ENCODE measurements at regions of chr1 and their contacts with region 1.

Region 1: GRCh38 chr1:186985889-186986491 is 157.2 kb downstream of the PLA2G4A start:
- DNase-seq: no peak
- H3K4me3 ChIP-seq: no peak overlapping the region
- H3K27ac ChIP-seq: no peak overlapping the region
- H3K4me1 ChIP-seq: no peaks in the 10 kb centered on the region
- H3K27me3 ChIP-seq: no peaks in the 10 kb centered on the region
- CTCF ChIP-seq: peak; percentile 68

Region 2: DNA sequence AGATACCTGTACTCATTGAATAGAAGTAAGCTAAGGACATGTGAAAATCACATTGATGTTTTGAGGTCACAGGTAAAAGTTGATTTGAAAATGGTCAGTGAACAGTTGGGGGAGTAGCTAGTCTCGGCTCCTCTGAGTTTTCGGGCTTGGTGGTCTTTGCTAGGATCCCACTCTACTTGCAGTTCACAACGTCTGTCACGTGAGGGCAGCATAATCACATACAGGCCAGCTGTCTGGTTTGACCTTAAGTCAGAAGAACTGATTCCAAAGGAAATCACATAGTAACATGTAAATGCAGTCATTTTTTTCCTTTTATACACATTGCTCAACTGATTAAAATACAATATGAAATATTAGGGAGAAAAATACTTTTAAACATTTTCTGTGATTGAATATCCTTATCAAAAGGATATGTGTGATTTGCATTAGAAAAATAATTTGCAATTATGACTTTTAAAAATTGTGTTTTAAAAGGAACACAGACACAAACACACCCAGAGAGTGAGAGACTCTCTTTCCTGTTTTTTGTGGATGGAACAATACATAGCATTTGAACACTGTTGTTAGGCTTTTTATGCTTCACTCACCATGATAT is 503.2 kb before region 1 on chr1:
- intact Hi-C with region 1: loop called (anchors 2 kb)
- DNase-seq: peak; percentile 43
- H3K4me3 ChIP-seq: no peak overlapping the region
- H3K27ac ChIP-seq: no peak overlapping the region
- H3K4me1 ChIP-seq: no peaks in the 10 kb centered on the region
- H3K27me3 ChIP-seq: no peaks in the 10 kb centered on the region
- CTCF ChIP-seq: peak; percentile 88

Region 3: GRCh38 chr1:186605762-186606350 is 380.1 kb before region 1 on chr1:
- intact Hi-C with region 1: loop called (anchors 2 kb)
- DNase-seq: peak; percentile 34
- H3K4me3 ChIP-seq: no peak overlapping the region
- H3K27ac ChIP-seq: no peak overlapping the region
- H3K4me1 ChIP-seq: no peaks in the 10 kb centered on the region
- H3K27me3 ChIP-seq: no peaks in the 10 kb centered on the region
- CTCF ChIP-seq: peak; percentile 53

Region 4: GRCh38 chr1:186722711-186723309 is 263.2 kb before region 1 on chr1:
- intact Hi-C with region 1: loop called (anchors 5 kb)
- DNase-seq: peak; percentile 31
- H3K4me3 ChIP-seq: no peak overlapping the region
- H3K27ac ChIP-seq: no peak overlapping the region
- H3K4me1 ChIP-seq: no peaks in the 10 kb centered on the region
- H3K27me3 ChIP-seq: no peaks in the 10 kb centered on the region
- CTCF ChIP-seq: peak; percentile 50

Region 5: DNA sequence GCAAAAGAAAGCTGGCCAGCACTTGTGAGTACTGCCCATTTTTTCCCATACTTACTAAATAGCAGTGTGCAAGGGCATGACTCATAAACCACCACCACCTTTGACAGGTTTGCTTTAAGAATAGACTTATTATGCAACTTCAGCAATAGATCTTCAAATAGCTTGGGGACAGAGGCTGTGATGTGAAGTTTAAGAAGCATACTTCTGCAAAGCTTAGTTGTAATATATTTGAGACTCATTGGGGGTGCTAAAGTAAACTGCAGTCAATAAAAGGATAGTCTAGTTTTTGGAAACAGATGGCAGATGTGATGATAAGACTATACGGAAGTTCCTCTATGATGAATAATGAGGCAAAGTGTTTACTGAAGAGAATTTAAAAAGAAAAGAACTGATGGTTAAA is 52.8 kb after region 1 on chr1:
- intact Hi-C with region 1: no loop called
- DNase-seq: no peak
- H3K4me3 ChIP-seq: no peak overlapping the region
- H3K27ac ChIP-seq: no peak overlapping the region
- H3K4me1 ChIP-seq: no peaks in the 10 kb centered on the region
- H3K27me3 ChIP-seq: no peaks in the 10 kb centered on the region
- CTCF ChIP-seq: no peak

Measured in colonic mucosa (tissue), 4 donors.